Activated CD4-positive, alpha-beta memory T cell treated with anti-CD3 and anti-CD28 coated beads, Interleukin-2, amount 10 ng/mL, durations not matched to agents 7 days and 5 days (primary cell): ENCODE measurements at regions of chr3 and their contacts with region 1.

Region 1: DNA sequence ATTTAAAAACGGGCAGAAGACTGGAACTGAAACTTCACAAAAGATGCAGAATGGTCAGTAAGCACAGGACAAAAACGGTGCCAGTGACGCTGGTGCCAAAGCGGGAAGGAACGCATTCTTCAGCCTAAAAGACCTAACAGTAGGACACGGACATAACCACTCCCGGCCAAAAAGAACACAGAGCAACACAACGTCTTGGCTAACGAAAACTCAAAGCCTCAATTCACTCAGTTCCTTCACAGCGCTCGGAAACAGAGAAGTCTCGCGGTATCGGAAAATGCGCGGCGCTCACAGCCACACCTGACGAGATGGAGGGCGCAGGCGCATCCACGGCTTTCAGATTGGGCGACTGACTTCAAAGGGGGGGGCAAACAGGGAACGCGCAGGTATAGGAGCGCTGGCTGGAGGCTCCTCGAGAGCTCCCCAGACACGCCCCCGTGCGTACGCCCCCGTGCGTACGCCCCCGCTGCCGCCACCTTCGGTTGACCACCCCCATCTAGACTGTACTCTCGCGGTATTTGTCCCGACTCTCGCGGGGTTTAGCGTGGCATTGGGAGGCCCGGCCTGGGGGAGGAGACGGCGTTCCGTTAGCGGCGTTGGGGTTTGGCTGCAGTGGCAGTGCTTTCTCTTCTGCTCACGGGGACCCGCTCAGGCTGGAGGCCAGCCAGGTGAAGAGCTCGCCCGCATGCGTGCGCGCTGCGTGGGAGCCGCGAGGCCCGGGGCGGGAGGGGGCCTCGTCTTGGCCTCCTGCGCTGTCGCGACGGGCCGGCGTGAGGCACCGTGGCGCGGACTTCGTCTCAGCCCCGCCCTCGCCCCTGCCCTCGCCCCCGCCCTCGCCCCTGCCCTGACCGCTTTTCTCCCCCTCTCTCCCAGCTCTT is at the start of gene NKTR:
- DNase-seq: peak; percentile 100
- H3K4me3 Mint-ChIP-seq: peak within 1 kb of the TSS; percentile 84
- H3K27ac Mint-ChIP-seq: peak within 1 kb of the TSS; percentile 95
- H3K4me1 Mint-ChIP-seq: peaks cover 46% of the 10 kb centered on the region
- H3K27me3 Mint-ChIP-seq: no peaks in the 10 kb centered on the region
- total RNA-seq, gene NKTR: 97.8 to 98.9 TPM

Region 2: DNA sequence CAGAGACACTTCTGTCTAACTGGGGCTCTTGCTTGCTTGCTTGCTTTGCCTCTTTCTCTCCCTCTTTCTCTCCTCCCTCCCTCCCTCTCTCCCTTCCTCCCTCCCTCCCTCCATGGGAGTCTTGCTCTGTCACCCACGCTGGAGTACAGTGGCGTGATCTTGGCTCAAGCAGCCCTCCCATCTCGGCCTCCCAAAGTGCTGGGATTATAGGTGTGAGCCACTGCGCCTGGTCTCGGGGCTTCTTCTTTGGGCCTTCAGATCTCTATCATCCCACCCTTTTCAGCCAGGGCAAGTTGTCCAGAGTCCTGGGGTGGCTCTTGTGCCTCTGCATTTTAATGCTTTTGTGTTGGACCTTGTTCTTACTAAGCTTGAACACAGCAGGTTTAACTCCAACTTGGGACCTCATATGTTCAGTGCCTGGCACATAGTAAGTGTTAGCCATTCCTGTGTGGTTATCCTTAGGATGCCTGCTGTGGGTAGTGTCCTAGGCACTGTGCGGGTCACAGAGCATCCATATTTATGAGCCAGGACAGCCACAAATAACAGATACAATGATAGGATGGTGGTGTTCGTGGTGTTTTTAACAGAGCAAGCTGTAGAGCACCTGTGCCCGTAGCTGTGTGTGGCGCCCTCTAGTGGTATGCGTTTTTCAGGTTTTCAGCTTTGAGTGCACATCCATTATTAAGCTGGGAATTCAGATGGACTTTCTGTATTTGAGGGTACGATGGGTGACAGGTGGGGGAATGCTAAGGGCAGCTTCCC is 409.5 kb before region 1 on chr3:
- CTCF ChIA-PET with region 1: no interaction called
- POLR2A ChIA-PET with region 1: no interaction called
- DNase-seq: peak; percentile 71
- H3K4me3 Mint-ChIP-seq: no peak overlapping the region
- H3K27ac Mint-ChIP-seq: no peak overlapping the region
- H3K4me1 Mint-ChIP-seq: peaks cover 37% of the 10 kb centered on the region
- H3K27me3 Mint-ChIP-seq: no peaks in the 10 kb centered on the region

Region 3: GRCh38 chr3:42376344-42376798 is 224.0 kb before region 1 on chr3:
- CTCF ChIA-PET with region 1: no interaction called
- POLR2A ChIA-PET with region 1: no interaction called
- DNase-seq: no peak
- H3K4me3 Mint-ChIP-seq: no peak overlapping the region
- H3K27ac Mint-ChIP-seq: no peak overlapping the region
- H3K4me1 Mint-ChIP-seq: no peaks in the 10 kb centered on the region
- H3K27me3 Mint-ChIP-seq: peaks cover 7% of the 10 kb centered on the region

Region 4: GRCh38 chr3:42581709-42582473 is 18.5 kb before region 1 on chr3 and contains the start of gene SEC22C:
- CTCF ChIA-PET with region 1: interaction called, 31 read pairs
- POLR2A ChIA-PET with region 1: interaction called, 81 read pairs
- DNase-seq: peak; percentile 96
- H3K4me3 Mint-ChIP-seq: peak within 1 kb of the TSS; percentile 86
- H3K27ac Mint-ChIP-seq: peak within 1 kb of the TSS; percentile 87
- H3K4me1 Mint-ChIP-seq: peaks cover 63% of the 10 kb centered on the region
- H3K27me3 Mint-ChIP-seq: no peaks in the 10 kb centered on the region
- total RNA-seq, gene SEC22C: 58.8 to 62.0 TPM

Region 5: DNA sequence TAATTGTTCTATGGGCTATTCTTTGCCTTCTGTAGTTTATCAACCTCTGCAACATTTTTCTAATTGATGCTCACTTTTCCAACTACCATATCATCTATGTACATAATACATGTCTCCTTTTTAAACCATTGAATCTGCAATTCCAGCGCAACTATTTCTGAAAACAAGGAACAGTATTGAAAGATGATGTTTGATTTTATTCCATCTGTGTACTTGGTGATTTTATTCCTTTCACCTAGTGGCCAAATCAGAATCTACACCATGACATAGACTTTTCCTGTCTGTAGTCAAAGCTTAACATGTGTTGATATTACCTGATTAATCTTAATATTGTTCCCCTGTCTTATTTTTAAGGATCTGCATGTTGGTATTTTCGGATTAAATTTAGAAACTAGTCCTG is 13.1 kb after region 1 on chr3:
- CTCF ChIA-PET with region 1: interaction called, 30 read pairs
- POLR2A ChIA-PET with region 1: interaction called, 35 read pairs
- DNase-seq: no peak
- H3K4me3 Mint-ChIP-seq: no peak overlapping the region
- H3K27ac Mint-ChIP-seq: peak overlapping the region; percentile 0
- H3K4me1 Mint-ChIP-seq: peaks cover 52% of the 10 kb centered on the region
- H3K27me3 Mint-ChIP-seq: no peaks in the 10 kb centered on the region

Region 6: GRCh38 chr3:42652611-42653302 is 52.4 kb after region 1 on chr3:
- CTCF ChIA-PET with region 1: no interaction called
- POLR2A ChIA-PET with region 1: interaction called, 12 read pairs
- DNase-seq: peak; percentile 38
- H3K4me3 Mint-ChIP-seq: peak overlapping the region; percentile 74
- H3K27ac Mint-ChIP-seq: no peak overlapping the region
- H3K4me1 Mint-ChIP-seq: peaks cover 24% of the 10 kb centered on the region
- H3K27me3 Mint-ChIP-seq: peaks cover 10% of the 10 kb centered on the region